ENCODE measurements at regions of chr2 and their contacts with region 1.

Region 1: GRCh38 chr2:157327621-157328500 is 2.2 kb upstream of the ERMN start:
- H3K4me3 ChIP-seq: no peak overlapping the region
- H3K27ac ChIP-seq: no peak overlapping the region
- H3K4me1 ChIP-seq: no peaks in the 10 kb centered on the region
- CTCF ChIP-seq: peak; percentile 72

Region 2: DNA sequence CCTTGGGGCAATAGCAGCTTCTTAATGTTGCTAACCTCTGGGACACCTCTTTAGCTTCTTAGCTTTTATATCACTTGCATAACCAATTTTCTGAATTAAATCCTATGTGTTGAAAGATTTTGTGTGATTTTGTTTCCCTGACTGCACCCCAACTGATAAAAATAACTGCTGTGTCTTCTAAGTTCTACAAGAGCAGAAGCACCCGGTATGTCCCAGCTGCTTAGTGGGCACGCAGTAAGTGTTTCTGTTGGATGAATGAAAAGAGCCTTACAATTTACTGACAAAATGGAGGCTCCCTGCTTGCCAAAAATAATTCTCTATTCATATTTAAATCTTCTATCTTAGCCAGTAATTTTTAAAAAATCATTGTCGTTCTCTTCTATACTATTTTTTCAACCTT is 123.5 kb before region 1 on chr2:
- CTCF ChIA-PET with region 1: no interaction called
- POLR2A ChIA-PET with region 1: no interaction called
- H3K4me3 ChIP-seq: no peak overlapping the region
- H3K27ac ChIP-seq: no peak overlapping the region
- H3K4me1 ChIP-seq: no peaks in the 10 kb centered on the region
- CTCF ChIP-seq: no peak

Region 3: GRCh38 chr2:157311706-157312105 is 16.2 kb before region 1 on chr2:
- CTCF ChIA-PET with region 1: interaction called, 18 read pairs
- POLR2A ChIA-PET with region 1: no interaction called
- H3K4me3 ChIP-seq: no peak overlapping the region
- H3K27ac ChIP-seq: no peak overlapping the region
- H3K4me1 ChIP-seq: no peaks in the 10 kb centered on the region
- CTCF ChIP-seq: no peak

Region 4: GRCh38 chr2:157345647-157346389 is 18.0 kb after region 1 on chr2:
- CTCF ChIA-PET with region 1: interaction called, 15 read pairs
- POLR2A ChIA-PET with region 1: no interaction called
- H3K4me3 ChIP-seq: no peak overlapping the region
- H3K27ac ChIP-seq: no peak overlapping the region
- H3K4me1 ChIP-seq: no peaks in the 10 kb centered on the region
- CTCF ChIP-seq: no peak